Psoas muscle (tissue), 8 donors: ENCODE measurements at regions of chr4 and their contacts with region 1.

Region 1: DNA sequence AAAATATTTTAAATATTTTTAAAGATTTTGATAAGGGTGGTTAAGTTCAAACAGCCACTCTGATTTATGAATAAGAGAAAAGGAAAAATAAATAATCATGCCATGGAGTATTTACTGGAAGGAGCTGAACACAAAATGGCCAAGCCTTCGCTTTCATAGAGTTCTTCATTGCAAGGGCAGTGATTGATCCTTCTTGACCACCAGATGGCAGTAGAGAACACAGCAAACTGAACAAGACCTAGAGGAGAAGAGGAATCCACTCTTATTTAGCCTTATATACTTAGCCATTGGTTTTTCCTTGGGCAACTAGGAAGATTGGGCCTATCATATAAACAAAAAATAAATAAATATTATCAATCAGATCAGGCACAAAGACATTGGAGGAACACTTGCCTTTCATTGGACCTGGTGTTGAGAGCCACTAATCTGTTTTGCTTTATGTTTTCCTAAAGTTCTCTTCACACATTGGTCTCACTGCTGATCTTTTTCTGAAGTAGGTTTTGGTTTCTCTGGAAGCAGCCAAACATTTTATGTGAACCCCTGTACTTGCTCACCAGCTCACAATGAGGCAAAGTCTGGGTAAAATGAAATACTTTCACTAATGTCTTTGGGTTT is 58.1 kb upstream of the PARM1 start:
- DNase-seq: no peak
- ATAC-seq: peak; percentile 73 to 90 (median 80)
- H3K4me3 ChIP-seq: no peak overlapping the region
- H3K27ac ChIP-seq: no peak overlapping the region
- H3K4me1 ChIP-seq: no peaks in the 10 kb centered on the region
- H3K27me3 ChIP-seq: no peaks in the 10 kb centered on the region
- CTCF ChIP-seq: peak; percentile 94

Region 2: GRCh38 chr4:74738470-74739140 is 136.3 kb before region 1 on chr4:
- intact Hi-C with region 1: no loop called
- DNase-seq: no peak
- ATAC-seq: no peak
- H3K4me3 ChIP-seq: no peak overlapping the region
- H3K27ac ChIP-seq: no peak overlapping the region
- H3K4me1 ChIP-seq: no peaks in the 10 kb centered on the region
- H3K27me3 ChIP-seq: no peaks in the 10 kb centered on the region
- CTCF ChIP-seq: no peak

Region 3: GRCh38 chr4:75118739-75119138 is 243.9 kb after region 1 on chr4:
- intact Hi-C with region 1: loop called (anchors 5 kb)
- DNase-seq: no peak
- ATAC-seq: no peak
- H3K4me3 ChIP-seq: no peak overlapping the region
- H3K27ac ChIP-seq: no peak overlapping the region
- H3K4me1 ChIP-seq: no peaks in the 10 kb centered on the region
- H3K27me3 ChIP-seq: no peaks in the 10 kb centered on the region
- CTCF ChIP-seq: no peak

Region 4: DNA sequence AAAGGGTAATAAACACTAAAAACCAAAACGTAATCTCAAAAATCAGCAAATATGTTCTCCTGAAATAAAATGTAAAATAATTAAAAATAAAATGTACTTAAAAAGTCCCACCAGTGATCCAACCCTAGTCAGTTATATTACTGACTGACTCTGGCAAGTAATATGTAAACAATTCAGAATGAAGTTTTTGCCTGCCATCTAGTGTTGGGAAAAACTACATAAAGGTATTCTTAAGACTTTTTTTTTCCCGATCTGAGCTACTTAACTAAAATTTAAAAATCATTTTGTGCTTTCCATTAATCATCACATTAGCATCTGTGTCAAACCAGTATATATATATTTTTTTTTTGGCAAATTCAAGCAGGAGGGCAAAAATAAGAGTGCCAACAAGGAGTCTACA is 615.3 kb after region 1 on chr4:
- intact Hi-C with region 1: loop called in 1 of 2 experiments (anchors 10 kb)
- DNase-seq: no peak
- ATAC-seq: no peak
- H3K4me3 ChIP-seq: no peak overlapping the region
- H3K27ac ChIP-seq: no peak overlapping the region
- H3K4me1 ChIP-seq: no peaks in the 10 kb centered on the region
- H3K27me3 ChIP-seq: no peaks in the 10 kb centered on the region
- CTCF ChIP-seq: peak; percentile 25